Naive thymus-derived CD4-positive, alpha-beta T cell (primary cell): ENCODE measurements at regions of chr21 and their contacts with region 1.

Region 1: DNA sequence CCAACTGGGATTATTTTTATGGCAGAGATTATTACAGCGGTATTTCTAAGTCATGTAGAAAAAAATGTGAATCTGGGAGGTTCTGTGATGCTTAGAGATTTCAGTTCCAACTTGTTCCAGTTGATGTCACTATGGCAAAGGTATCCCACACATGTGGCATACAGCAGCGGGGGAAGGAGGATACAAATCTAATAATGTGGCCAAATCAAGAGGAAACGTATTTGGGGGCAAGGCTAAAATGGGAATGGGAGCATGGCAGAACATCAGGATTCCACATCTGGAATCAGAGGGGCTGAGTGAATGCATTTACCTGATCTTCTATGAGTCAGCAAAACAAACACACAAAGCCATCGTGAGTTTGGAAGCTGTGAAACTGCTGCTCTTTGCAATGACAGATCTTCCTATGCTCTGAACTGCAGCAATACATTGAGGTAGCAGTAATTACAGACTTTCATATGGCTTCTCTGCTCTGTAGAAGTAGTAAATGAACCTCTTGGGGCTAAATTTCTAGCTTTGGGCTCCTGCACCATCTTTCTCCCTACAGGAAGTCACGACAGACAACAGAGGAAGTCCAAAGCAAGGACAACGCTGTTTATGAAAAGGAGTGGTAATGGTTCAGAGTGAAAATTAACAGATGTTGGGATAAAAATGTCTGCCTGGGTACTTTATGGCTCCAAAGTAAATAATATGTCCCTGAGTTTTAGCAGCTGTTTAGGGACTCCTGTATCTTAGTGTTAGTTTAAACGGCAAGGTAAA is 55.5 kb downstream of the GABPA start:
- DNase-seq: peak in 5 of 9 donors; percentile 11 to 25 (median 13)
- ATAC-seq: peak; percentile 69
- H3K4me3 ChIP-seq: peak overlapping the region; percentile 59
- H3K4me3 Mint-ChIP-seq: peak overlapping the region; percentile 67 to 93 (median 84)
- H3K27ac ChIP-seq: no peak overlapping the region
- H3K27ac Mint-ChIP-seq: peak overlapping the region in 4 of 9 donors; percentile 20 to 80 (median 45)
- H3K4me1 ChIP-seq: peaks cover 0 to 6% of the 10 kb centered on the region in 2 donors
- H3K4me1 Mint-ChIP-seq: peaks cover 6 to 15% (median 12%) of the 10 kb centered on the region in 7 donors
- H3K27me3 ChIP-seq: no peaks in the 10 kb centered on the region
- H3K27me3 Mint-ChIP-seq: peaks cover 9 to 26% (median 20%) of the 10 kb centered on the region in 5 donors

Region 2: DNA sequence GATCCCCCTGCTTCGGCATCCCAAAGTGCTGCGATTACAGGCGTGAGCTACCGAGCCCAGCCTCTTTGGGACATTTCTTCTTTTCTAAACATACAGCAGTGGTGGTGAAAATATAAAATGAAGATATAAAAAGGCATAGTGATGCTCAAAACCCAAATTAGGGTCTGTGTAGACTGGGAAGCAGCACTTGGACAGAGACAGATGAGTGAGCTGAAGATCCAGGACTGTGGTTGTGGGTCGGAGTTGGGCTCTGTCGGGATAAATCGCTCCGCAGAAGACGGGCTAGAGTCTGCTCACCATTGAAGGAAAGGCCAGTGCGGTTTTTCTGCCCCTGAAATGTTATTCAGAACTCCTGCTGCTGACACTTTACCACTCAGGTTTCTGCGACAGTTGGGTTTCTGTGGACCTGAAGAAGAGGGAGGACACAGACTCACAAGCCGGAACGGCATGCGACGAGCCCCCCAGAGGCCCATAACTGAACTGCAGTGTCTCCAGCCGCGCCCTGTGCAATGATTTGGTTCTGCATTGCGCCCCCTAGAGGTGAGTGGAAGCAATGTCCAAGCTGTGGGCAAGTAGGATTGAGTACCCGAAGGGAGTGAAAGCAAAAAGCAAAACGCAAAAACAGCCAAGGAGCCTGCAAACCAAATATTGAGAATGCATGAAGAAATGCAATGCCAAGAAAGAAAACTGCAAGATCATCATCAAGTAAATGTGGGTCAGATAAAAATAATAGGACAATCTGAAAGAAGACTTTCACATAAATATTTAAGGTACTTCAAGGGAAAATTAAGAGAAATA is 11.1 kb after region 1 on chr21:
- CTCF ChIA-PET with region 1: interaction called, 3 read pairs
- POLR2A ChIA-PET with region 1: no interaction called
- intact Hi-C with region 1: loop called (anchors 1 kb)
- DNase-seq: peak; percentile 66 to 89 (median 84)
- ATAC-seq: peak; percentile 100
- H3K4me3 ChIP-seq: no peak overlapping the region
- H3K4me3 Mint-ChIP-seq: peak overlapping the region in 8 of 10 donors; percentile 7 to 78 (median 60)
- H3K27ac ChIP-seq: no peak overlapping the region
- H3K27ac Mint-ChIP-seq: peak overlapping the region in 3 of 9 donors; percentile 7 to 15 (median 10)
- H3K4me1 ChIP-seq: no peaks in the 10 kb centered on the region
- H3K4me1 Mint-ChIP-seq: peaks cover 2 to 10% (median 7%) of the 10 kb centered on the region in 7 donors
- H3K27me3 ChIP-seq: no peaks in the 10 kb centered on the region
- H3K27me3 Mint-ChIP-seq: peaks cover 5 to 31% (median 19%) of the 10 kb centered on the region in 5 donors

Region 3: DNA sequence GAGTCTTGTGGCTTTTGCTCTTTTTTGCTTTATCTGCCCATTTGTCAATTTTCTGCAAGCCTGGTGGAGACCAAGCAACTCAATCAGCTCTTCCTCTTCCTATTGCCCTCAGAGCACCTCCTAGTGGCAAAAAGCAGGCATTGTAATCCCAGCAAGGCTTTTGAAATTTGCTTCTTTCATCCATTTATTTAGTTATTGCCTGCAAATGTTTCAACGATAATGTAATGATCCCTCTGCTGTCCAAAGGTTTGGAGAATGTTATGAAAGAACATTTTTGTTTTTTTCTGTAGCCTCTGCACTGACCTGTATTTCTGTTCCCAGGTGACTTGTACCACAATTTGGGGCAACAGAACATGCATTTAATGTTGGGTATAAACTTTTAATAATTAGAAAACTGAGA is 72.3 kb after region 1 on chr21:
- CTCF ChIA-PET with region 1: no interaction called
- POLR2A ChIA-PET with region 1: no interaction called
- intact Hi-C with region 1: loop called in 1 of 2 experiments (anchors 1 kb)
- DNase-seq: peak in 6 of 9 donors; percentile 7 to 33 (median 20)
- ATAC-seq: peak; percentile 54
- H3K4me3 ChIP-seq: no peak overlapping the region
- H3K4me3 Mint-ChIP-seq: no peak overlapping the region
- H3K27ac ChIP-seq: no peak overlapping the region
- H3K27ac Mint-ChIP-seq: no peak overlapping the region
- H3K4me1 ChIP-seq: no peaks in the 10 kb centered on the region
- H3K4me1 Mint-ChIP-seq: peaks cover 0 to 7% (median 0%) of the 10 kb centered on the region in 7 donors
- H3K27me3 ChIP-seq: no peaks in the 10 kb centered on the region
- H3K27me3 Mint-ChIP-seq: peaks cover 0 to 19% (median 0%) of the 10 kb centered on the region in 5 donors

Region 4: GRCh38 chr21:26715878-26716506 is 925.7 kb after region 1 on chr21:
- CTCF ChIA-PET with region 1: no interaction called
- POLR2A ChIA-PET with region 1: no interaction called
- intact Hi-C with region 1: loop called in 1 of 2 experiments (anchors 1 kb)
- DNase-seq: peak in 4 of 9 donors; percentile 4 to 15 (median 5)
- ATAC-seq: peak; percentile 46
- H3K4me3 ChIP-seq: no peak overlapping the region
- H3K4me3 Mint-ChIP-seq: no peak overlapping the region
- H3K27ac ChIP-seq: no peak overlapping the region
- H3K27ac Mint-ChIP-seq: no peak overlapping the region
- H3K4me1 ChIP-seq: no peaks in the 10 kb centered on the region
- H3K4me1 Mint-ChIP-seq: no peaks in the 10 kb centered on the region
- H3K27me3 ChIP-seq: no peaks in the 10 kb centered on the region
- H3K27me3 Mint-ChIP-seq: peaks cover 2 to 14% (median 6%) of the 10 kb centered on the region in 5 donors